ENCODE measurements at regions of chr3 and their contacts with region 1.

Region 1: GRCh38 chr3:141561426-141562034 is 74.7 kb downstream of the RASA2 start:
- DNase-seq: no peak

Region 2: DNA sequence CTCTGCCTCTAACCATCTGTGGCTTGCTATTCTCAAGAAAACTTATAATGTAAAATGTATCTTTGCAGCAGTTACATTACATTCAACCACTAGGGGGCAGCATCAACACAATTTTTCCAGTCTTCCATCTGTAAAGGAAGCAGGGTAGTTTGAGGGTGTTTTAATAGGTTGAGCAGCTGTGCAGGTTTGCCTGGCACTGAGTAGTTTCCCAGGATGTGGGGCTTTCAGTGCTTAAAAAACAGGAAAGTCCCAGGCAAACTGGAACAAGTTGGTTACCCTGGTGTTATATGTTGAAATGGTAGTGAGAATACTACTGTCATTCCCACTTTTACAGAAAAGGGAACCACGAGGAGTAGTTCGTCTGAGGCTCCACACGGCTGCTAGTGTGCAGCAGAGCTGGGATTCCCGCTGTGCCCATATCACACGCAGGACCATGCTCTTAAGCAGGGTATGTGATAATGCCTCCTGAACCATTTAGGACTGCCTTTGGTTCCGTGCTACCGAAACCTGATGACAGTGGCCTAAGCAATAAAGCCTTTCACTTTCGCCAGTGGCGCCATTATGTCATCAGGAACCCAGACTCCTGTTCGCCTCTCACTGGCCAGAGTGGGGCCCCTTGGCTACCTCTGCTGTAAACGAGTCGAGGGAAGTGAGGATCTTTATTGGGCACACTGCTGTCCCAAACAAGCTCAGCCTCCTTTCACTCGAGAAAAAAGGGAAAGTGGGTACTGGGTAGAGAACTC is 257.9 kb before region 1 on chr3:
- intact Hi-C with region 1: loop called in 1 of 2 experiments (anchors 5 kb)
- DNase-seq: no peak

Region 3: GRCh38 chr3:141460097-141460704 is 101.3 kb before region 1 on chr3:
- intact Hi-C with region 1: loop called in 1 of 2 experiments (anchors 5 kb)
- DNase-seq: peak; percentile 95

Region 4: GRCh38 chr3:143421556-143421955 is 1860.0 kb after region 1 on chr3:
- intact Hi-C with region 1: no loop called
- DNase-seq: no peak